A673 (cell line): ENCODE measurements at regions of chr7 and their contacts with region 1.

Region 1: GRCh38 chr7:56127241-56127975 is 11.2 kb upstream of the NUPR2 start:
- DNase-seq: no peak
- H3K4me3 ChIP-seq: no peak overlapping the region
- H3K27ac ChIP-seq: no peak overlapping the region
- H3K4me1 ChIP-seq: no peaks in the 10 kb centered on the region
- H3K27me3 ChIP-seq: no peaks in the 10 kb centered on the region
- CTCF ChIP-seq: no peak

Region 2: GRCh38 chr7:54839538-54840213 is 1287.7 kb before region 1 on chr7:
- CTCF ChIA-PET with region 1: no interaction called
- POLR2A ChIA-PET with region 1: no interaction called
- intact Hi-C with region 1: no loop called
- DNase-seq: no peak
- H3K4me3 ChIP-seq: no peak overlapping the region
- H3K27ac ChIP-seq: no peak overlapping the region
- H3K4me1 ChIP-seq: no peaks in the 10 kb centered on the region
- H3K27me3 ChIP-seq: no peaks in the 10 kb centered on the region
- CTCF ChIP-seq: no peak; the same call in 1 of the 2 replicates

Region 3: GRCh38 chr7:56009695-56010094 is 117.7 kb before region 1 on chr7:
- CTCF ChIA-PET with region 1: no interaction called
- POLR2A ChIA-PET with region 1: interaction called, 11 read pairs
- intact Hi-C with region 1: no loop called
- DNase-seq: no peak
- H3K4me3 ChIP-seq: no peak overlapping the region
- H3K27ac ChIP-seq: no peak overlapping the region
- H3K4me1 ChIP-seq: no peaks in the 10 kb centered on the region
- H3K27me3 ChIP-seq: no peaks in the 10 kb centered on the region
- CTCF ChIP-seq: no peak

Region 4: DNA sequence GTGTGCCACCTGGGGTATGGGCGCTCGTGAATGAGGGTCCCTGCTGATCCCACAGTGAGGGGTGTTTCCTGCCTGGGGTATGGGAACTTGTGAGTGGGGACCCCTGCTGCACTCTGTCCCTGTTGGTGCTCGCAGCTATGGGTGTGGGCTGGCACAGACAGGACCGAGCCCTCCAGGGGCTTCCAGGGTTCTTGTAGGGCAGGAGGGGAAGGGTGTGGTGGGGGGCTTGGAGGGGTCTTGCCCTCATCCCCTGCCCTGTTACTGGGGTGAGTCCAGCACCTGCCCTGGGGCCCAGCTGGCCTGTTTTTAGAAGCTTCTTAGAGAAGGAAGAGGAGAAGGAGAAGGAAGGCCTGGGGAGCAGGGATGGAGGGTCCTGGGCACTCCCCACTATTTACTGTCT is 365.8 kb after region 1 on chr7:
- CTCF ChIA-PET with region 1: no interaction called
- POLR2A ChIA-PET with region 1: no interaction called
- intact Hi-C with region 1: no loop called
- DNase-seq: no peak
- H3K4me3 ChIP-seq: no peak overlapping the region
- H3K27ac ChIP-seq: no peak overlapping the region
- H3K4me1 ChIP-seq: no peaks in the 10 kb centered on the region
- H3K27me3 ChIP-seq: no peaks in the 10 kb centered on the region
- CTCF ChIP-seq: no peak